CD8-positive, alpha-beta memory T cell (primary cell): ENCODE measurements at regions of chr4 and their contacts with region 1.

Region 1: DNA sequence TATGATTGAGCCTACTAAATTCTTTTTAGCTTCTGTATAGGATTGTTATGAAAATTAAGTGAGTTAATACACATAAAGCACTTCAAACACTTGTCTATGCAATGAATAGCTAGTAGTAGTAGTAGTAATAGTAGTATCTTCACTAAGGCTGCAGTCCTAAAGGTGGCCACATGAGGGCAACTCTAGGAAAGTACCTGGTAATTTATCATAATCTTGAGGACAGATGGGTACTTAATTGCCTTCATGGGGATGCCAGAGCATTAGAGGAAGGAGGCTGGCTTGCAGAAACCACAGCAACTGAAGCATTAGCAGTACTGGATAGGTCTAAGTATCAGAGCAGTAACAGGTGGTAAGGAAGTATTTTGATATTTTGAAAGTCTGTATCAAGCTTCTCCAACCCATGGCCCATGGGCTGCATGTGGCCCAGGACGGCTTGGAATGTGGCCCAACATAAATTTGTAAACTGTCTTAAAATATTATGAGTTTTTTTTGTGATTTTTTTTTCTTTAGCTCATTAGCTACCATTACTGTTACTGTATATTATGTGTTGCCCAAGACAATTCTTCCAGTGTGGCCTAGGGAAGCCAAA is 17.3 kb downstream of the NIPAL1 start:
- DNase-seq: peak; percentile 24 to 68 (median 46)
- H3K4me3 ChIP-seq: no peak overlapping the region
- H3K4me3 Mint-ChIP-seq: peak overlapping the region in 1 of 7 donors; percentile 20
- H3K27ac ChIP-seq: no peak overlapping the region
- H3K27ac Mint-ChIP-seq: no peak overlapping the region
- H3K4me1 ChIP-seq: no peaks in the 10 kb centered on the region
- H3K4me1 Mint-ChIP-seq: peaks cover 3 to 7% (median 5%) of the 10 kb centered on the region in 3 donors
- H3K27me3 ChIP-seq: no peaks in the 10 kb centered on the region
- H3K27me3 Mint-ChIP-seq: peaks cover 0 to 5% of the 10 kb centered on the region in 2 donors

Region 2: DNA sequence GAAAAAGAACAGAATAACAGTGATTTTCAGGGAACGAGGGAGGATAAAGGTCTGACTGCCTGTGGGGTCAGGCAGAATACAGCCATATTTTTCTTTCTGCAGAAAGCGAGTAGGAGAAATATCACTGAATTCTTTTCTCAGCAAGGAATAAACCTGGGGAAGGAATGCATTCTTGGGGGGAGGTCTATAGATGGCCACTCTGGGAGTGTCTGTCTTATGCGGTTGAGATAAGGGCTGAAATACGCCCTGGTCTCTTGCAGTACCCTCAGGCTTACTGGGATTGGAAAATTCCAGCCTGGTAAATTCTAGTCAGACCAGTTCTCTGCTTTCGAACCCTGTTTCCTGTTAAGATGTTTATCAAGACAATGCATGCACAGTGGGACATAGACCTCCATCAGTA is 43.8 kb before region 1 on chr4:
- CTCF ChIA-PET with region 1: no interaction called
- POLR2A ChIA-PET with region 1: no interaction called
- DNase-seq: no peak
- H3K4me3 ChIP-seq: no peak overlapping the region
- H3K4me3 Mint-ChIP-seq: no peak overlapping the region
- H3K27ac ChIP-seq: no peak overlapping the region
- H3K27ac Mint-ChIP-seq: no peak overlapping the region
- H3K4me1 ChIP-seq: no peaks in the 10 kb centered on the region
- H3K4me1 Mint-ChIP-seq: peaks cover 6 to 9% (median 6%) of the 10 kb centered on the region in 3 donors
- H3K27me3 ChIP-seq: no peaks in the 10 kb centered on the region
- H3K27me3 Mint-ChIP-seq: peaks cover 7 to 9% of the 10 kb centered on the region in 2 donors

Region 3: DNA sequence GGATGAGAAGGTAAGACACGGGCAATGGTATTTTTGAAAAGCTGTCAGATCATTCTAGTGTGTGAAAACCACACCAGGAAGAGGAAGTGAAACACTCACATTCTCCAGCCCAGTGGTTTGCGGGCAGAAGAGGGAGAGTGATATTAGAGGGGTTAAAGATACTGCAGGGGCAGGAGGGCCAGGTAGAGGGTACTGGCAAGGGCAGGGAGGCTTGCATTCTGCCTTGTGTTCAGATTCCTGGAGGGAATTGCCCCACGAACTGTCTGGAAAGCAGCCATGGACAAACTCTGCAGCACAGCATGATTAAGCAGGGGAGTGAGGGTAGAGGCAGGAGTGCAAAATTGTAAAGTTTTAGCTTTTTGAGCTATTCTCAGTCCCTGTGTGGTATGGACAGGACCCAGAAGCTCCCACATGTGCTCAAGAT is 13.5 kb after region 1 on chr4:
- CTCF ChIA-PET with region 1: interaction called, 22 read pairs
- POLR2A ChIA-PET with region 1: no interaction called
- DNase-seq: peak; percentile 25 to 80 (median 35)
- H3K4me3 ChIP-seq: peak overlapping the region; percentile 16
- H3K4me3 Mint-ChIP-seq: peak overlapping the region; percentile 3 to 87 (median 70)
- H3K27ac ChIP-seq: no peak overlapping the region
- H3K27ac Mint-ChIP-seq: peak overlapping the region in 2 of 8 donors; percentile 21 to 41
- H3K4me1 ChIP-seq: peaks cover 49% of the 10 kb centered on the region
- H3K4me1 Mint-ChIP-seq: peaks cover 45 to 59% (median 59%) of the 10 kb centered on the region in 3 donors
- H3K27me3 ChIP-seq: peaks cover 5% of the 10 kb centered on the region
- H3K27me3 Mint-ChIP-seq: peaks cover 15% of the 10 kb centered on the region in 2 donors

Region 4: GRCh38 chr4:48085821-48086607 is 52.1 kb after region 1 on chr4:
- CTCF ChIA-PET with region 1: interaction called, 40 read pairs
- POLR2A ChIA-PET with region 1: no interaction called
- DNase-seq: no peak
- H3K4me3 ChIP-seq: no peak overlapping the region
- H3K4me3 Mint-ChIP-seq: no peak overlapping the region
- H3K27ac ChIP-seq: no peak overlapping the region
- H3K27ac Mint-ChIP-seq: peak overlapping the region in 2 of 8 donors; percentile 21 to 33
- H3K4me1 ChIP-seq: no peaks in the 10 kb centered on the region
- H3K4me1 Mint-ChIP-seq: peaks cover 6 to 9% (median 7%) of the 10 kb centered on the region in 3 donors
- H3K27me3 ChIP-seq: no peaks in the 10 kb centered on the region
- H3K27me3 Mint-ChIP-seq: peaks cover 0 to 1% of the 10 kb centered on the region in 2 donors